Common myeloid progenitor, CD34-positive (primary cell): ENCODE measurements at regions of chr1 and their contacts with region 1.

Region 1: DNA sequence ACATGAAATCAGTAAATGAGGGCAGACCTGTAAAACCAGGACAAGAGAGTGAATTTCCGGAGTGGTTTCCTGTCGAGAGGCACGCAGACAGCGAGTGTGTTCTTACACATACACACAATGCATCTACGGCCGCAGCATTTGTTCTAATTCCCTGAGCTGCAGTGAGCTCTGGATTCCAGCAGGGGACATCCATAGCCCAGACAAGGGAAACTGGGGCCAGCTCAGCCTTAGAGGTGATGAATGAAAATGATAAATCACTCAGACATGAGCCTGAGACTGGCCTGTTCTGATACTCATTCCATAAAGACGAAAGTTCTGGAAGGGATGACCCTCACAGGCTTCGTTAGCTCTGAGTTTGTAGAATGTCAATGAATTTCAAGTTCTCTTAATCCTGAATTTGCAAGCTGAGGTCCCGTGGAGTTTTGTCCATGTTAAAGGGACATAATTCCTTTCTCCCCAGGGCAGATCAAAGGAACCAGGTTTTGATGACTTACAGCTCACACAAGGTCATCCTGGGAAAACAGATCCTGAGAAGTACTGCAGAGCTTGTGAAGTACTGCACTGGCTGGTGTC is 207.9 kb upstream of the C1orf87 start:
- DNase-seq: peak; percentile 59 to 72 (median 69)
- H3K4me3 ChIP-seq: peak overlapping the region in 1 of 7 experiments; percentile 38
- H3K27ac ChIP-seq: no peak overlapping the region
- H3K4me1 ChIP-seq: peaks cover 6 to 9% (median 8%) of the 10 kb centered on the region in 4 experiments
- H3K27me3 ChIP-seq: no peaks in the 10 kb centered on the region

Region 2: DNA sequence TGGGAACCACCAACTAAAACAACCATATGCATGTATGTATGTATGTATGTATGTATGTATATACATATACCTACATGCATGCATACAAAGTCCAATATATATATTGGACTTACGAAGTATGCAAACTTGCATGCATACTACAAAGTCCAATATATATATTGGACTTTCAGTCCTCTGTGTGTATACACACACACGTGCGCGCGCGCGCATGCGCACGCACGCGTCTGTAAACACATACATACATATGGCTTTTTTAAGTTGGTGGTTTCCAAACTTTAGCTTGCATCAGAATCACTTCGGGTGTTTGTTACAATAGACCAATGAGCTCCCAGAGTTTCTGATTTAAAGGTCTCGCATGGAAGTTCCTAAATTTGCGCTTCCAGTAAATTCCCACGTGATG is 10.4 kb before region 1 on chr1:
- CTCF ChIA-PET with region 1: interaction called, 12 read pairs
- POLR2A ChIA-PET with region 1: no interaction called
- DNase-seq: no peak
- H3K4me3 ChIP-seq: no peak overlapping the region
- H3K27ac ChIP-seq: no peak overlapping the region
- H3K4me1 ChIP-seq: no peaks in the 10 kb centered on the region
- H3K27me3 ChIP-seq: no peaks in the 10 kb centered on the region

Region 3: GRCh38 chr1:60311838-60312237 is 30.4 kb after region 1 on chr1:
- CTCF ChIA-PET with region 1: no interaction called
- POLR2A ChIA-PET with region 1: no interaction called
- DNase-seq: no peak
- H3K4me3 ChIP-seq: no peak overlapping the region
- H3K27ac ChIP-seq: no peak overlapping the region
- H3K4me1 ChIP-seq: no peaks in the 10 kb centered on the region
- H3K27me3 ChIP-seq: no peaks in the 10 kb centered on the region

Region 4: GRCh38 chr1:60765204-60765603 is 483.8 kb after region 1 on chr1:
- CTCF ChIA-PET with region 1: interaction called, 19 read pairs
- POLR2A ChIA-PET with region 1: no interaction called
- DNase-seq: peak; percentile 48 to 73 (median 70)
- H3K4me3 ChIP-seq: no peak overlapping the region
- H3K27ac ChIP-seq: no peak overlapping the region
- H3K4me1 ChIP-seq: no peaks in the 10 kb centered on the region
- H3K27me3 ChIP-seq: no peaks in the 10 kb centered on the region